B cell (primary cell): ENCODE measurements at regions of chr22 and their contacts with region 1.

Region 1: GRCh38 chr22:19619144-19620009 is 94.9 kb upstream of the SEPTIN5 start:
- DNase-seq: peak; percentile 59
- ATAC-seq: peak; percentile 31
- H3K4me3 ChIP-seq: peak overlapping the region in 1 of 5 experiments; percentile 23
- H3K4me3 Mint-ChIP-seq: peak overlapping the region; percentile 57
- H3K27ac ChIP-seq: no peak overlapping the region
- H3K27ac Mint-ChIP-seq: peak overlapping the region; percentile 28
- H3K4me1 ChIP-seq: peaks cover 35 to 59% of the 10 kb centered on the region in 2 donors
- H3K4me1 Mint-ChIP-seq: peaks cover 52% of the 10 kb centered on the region
- H3K27me3 ChIP-seq: peaks cover 0 to 22% (median 5%) of the 10 kb centered on the region in 4 experiments
- H3K27me3 Mint-ChIP-seq: peaks cover 30% of the 10 kb centered on the region
- CTCF ChIP-seq: no peak

Region 2: GRCh38 chr22:19565382-19566278 is 53.7 kb before region 1 on chr22:
- CTCF ChIA-PET with region 1: no interaction called
- POLR2A ChIA-PET with region 1: interaction called, 10 read pairs
- intact Hi-C with region 1: no loop called
- DNase-seq: no peak
- ATAC-seq: no peak
- H3K4me3 ChIP-seq: no peak overlapping the region
- H3K4me3 Mint-ChIP-seq: no peak overlapping the region
- H3K27ac ChIP-seq: no peak overlapping the region
- H3K27ac Mint-ChIP-seq: no peak overlapping the region
- H3K4me1 ChIP-seq: no peaks in the 10 kb centered on the region
- H3K4me1 Mint-ChIP-seq: no peaks in the 10 kb centered on the region
- H3K27me3 ChIP-seq: peaks cover 0 to 10% (median 0%) of the 10 kb centered on the region in 4 experiments
- H3K27me3 Mint-ChIP-seq: peaks cover 21% of the 10 kb centered on the region
- CTCF ChIP-seq: no peak

Region 3: GRCh38 chr22:19591568-19591967 is 27.8 kb before region 1 on chr22:
- CTCF ChIA-PET with region 1: no interaction called
- POLR2A ChIA-PET with region 1: no interaction called
- intact Hi-C with region 1: no loop called
- DNase-seq: no peak
- ATAC-seq: no peak
- H3K4me3 ChIP-seq: no peak overlapping the region
- H3K4me3 Mint-ChIP-seq: no peak overlapping the region
- H3K27ac ChIP-seq: no peak overlapping the region
- H3K27ac Mint-ChIP-seq: no peak overlapping the region
- H3K4me1 ChIP-seq: peaks cover under 1 to 2% of the 10 kb centered on the region in 2 donors
- H3K4me1 Mint-ChIP-seq: peaks cover 4% of the 10 kb centered on the region
- H3K27me3 ChIP-seq: peaks cover 0 to 4% (median 0%) of the 10 kb centered on the region in 4 experiments
- H3K27me3 Mint-ChIP-seq: peaks cover 22% of the 10 kb centered on the region
- CTCF ChIP-seq: no peak